PC-3 (cell line): ENCODE measurements at regions of chr15 and their contacts with region 1.

Region 1: GRCh38 chr15:36591536-36592411 is 12.3 kb downstream of the CDIN1 start:
- DNase-seq: peak; percentile 88
- ATAC-seq: peak; percentile 37
- H3K4me3 ChIP-seq: peak overlapping the region; percentile 17; the same call in 1 of the 2 replicates
- H3K27ac ChIP-seq: peak overlapping the region; percentile 95
- H3K4me1 ChIP-seq: peaks cover 69% of the 10 kb centered on the region
- H3K27me3 ChIP-seq: no peaks in the 10 kb centered on the region
- CTCF ChIP-seq: peak; percentile 33; the same call in 1 of the 2 replicates

Region 2: DNA sequence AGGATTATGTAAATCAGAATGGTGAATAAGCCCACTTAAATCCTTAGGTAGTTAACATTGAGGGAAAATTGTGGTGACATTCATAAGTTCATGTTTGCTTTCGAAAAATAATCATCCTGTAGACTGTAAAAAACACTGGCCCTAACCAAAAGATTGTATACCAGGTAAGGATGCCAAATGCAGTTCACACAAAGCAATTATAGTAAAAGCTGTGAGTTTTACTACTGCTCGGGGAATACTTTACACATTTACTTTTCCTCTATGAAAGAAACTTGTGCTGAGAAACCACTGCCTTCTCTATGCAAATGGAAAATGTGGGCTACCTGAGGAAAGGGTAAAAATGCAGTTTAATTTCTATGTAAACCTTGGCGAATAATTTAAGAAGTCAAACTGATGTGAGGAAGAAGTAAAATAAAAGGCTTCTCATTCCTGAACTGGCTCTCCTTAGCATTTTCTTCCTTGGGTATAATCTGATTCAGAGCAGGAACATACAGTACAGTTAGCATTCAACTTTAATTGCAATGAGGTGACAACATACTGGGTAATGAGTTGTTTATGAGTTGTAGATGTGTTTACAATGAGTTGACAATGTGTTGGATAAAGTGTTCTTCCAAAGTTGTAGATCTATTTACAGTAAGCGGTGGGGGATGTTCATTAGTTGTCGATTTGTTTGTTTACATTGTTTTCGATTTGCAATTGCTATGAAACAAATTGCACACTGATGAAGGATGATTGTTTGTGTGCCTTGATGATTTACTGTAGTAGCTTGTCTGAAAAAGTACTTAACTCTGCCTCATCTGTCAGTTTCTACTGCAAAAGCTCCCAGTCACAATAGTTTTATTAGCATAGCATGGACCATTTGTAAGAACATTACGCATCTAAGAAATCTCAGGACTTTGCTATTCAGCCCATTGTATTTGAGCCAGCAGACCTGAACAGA is 592.8 kb before region 1 on chr15:
- CTCF ChIA-PET with region 1: no interaction called
- POLR2A ChIA-PET with region 1: interaction called, 13 read pairs
- intact Hi-C with region 1: no loop called
- DNase-seq: no peak
- ATAC-seq: peak; percentile 42
- H3K4me3 ChIP-seq: no peak overlapping the region
- H3K27ac ChIP-seq: no peak overlapping the region
- H3K4me1 ChIP-seq: no peaks in the 10 kb centered on the region
- H3K27me3 ChIP-seq: no peaks in the 10 kb centered on the region
- CTCF ChIP-seq: no peak

Region 3: GRCh38 chr15:36612063-36612788 is 20.5 kb after region 1 on chr15:
- CTCF ChIA-PET with region 1: no interaction called
- POLR2A ChIA-PET with region 1: interaction called, 7 read pairs
- intact Hi-C with region 1: loop called (anchors 1 kb)
- DNase-seq: peak; percentile 96
- ATAC-seq: peak; percentile 96
- H3K4me3 ChIP-seq: peak overlapping the region; percentile 40
- H3K27ac ChIP-seq: peak overlapping the region; percentile 94
- H3K4me1 ChIP-seq: peaks cover 44% of the 10 kb centered on the region
- H3K27me3 ChIP-seq: no peaks in the 10 kb centered on the region
- CTCF ChIP-seq: no peak

Region 4: GRCh38 chr15:36798366-36798765 is 206.6 kb after region 1 on chr15:
- CTCF ChIA-PET with region 1: no interaction called
- POLR2A ChIA-PET with region 1: no interaction called
- intact Hi-C with region 1: loop called (anchors 5 kb)
- DNase-seq: peak; percentile 92
- ATAC-seq: peak; percentile 77
- H3K4me3 ChIP-seq: no peak overlapping the region
- H3K27ac ChIP-seq: peak overlapping the region; percentile 20
- H3K4me1 ChIP-seq: peaks cover 37% of the 10 kb centered on the region
- H3K27me3 ChIP-seq: no peaks in the 10 kb centered on the region
- CTCF ChIP-seq: no peak

Region 5: DNA sequence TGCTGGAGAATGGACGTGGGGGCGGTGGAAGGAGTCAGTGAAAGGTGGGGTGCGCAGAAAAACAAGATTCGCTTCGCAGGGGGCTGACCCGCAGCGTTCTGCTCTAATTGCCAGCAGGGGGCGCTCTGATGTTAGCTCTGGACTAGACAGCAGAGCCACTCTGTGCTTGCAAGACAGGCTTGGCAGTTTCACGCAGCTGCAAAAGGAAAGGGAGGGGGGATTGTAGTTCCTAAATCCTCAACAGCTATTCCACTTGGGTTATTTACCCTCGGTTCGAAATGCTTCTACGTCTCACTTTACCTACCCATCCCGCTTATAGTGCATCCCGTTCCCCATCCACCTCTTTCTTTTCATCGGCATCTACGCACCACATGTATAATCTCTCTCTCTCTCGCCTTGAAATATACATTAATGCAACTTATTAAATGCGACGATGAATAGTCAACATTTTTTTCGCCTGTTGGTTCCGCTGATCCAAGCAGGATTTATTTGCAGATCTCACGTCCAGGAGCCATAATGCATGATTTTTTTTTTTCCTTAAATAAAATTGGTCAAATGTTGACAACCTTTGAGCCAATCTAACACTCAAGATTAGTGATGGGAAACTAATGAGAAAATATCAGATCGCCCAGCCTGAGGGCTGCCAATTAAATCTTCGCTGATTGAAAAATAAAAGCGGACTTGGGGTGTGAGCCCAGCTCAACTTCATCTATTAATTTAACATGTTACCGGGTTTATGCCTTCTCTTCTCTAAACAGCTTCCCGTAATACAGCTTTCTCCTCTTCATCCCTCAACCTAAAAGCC is 292.1 kb after region 1 on chr15:
- CTCF ChIA-PET with region 1: no interaction called
- POLR2A ChIA-PET with region 1: no interaction called
- intact Hi-C with region 1: loop called (anchors 5 kb)
- DNase-seq: peak; percentile 88
- ATAC-seq: peak; percentile 92
- H3K4me3 ChIP-seq: peak overlapping the region; percentile 70
- H3K27ac ChIP-seq: no peak overlapping the region
- H3K4me1 ChIP-seq: peaks cover 12% of the 10 kb centered on the region
- H3K27me3 ChIP-seq: peaks cover 45% of the 10 kb centered on the region
- CTCF ChIP-seq: peak; percentile 89

Region 6: GRCh38 chr15:37100109-37100965 is 508.6 kb after region 1 on chr15 and contains the start of gene MEIS2:
- CTCF ChIA-PET with region 1: no interaction called
- POLR2A ChIA-PET with region 1: no interaction called
- intact Hi-C with region 1: loop called (anchors 2 kb)
- DNase-seq: peak; percentile 85
- ATAC-seq: peak; percentile 41
- H3K4me3 ChIP-seq: peak within 1 kb of the TSS; percentile 93
- H3K27ac ChIP-seq: peak within 1 kb of the TSS; percentile 87
- H3K4me1 ChIP-seq: peaks cover 24% of the 10 kb centered on the region; the same call in 1 of the 2 replicates
- H3K27me3 ChIP-seq: no peaks in the 10 kb centered on the region
- CTCF ChIP-seq: no peak
- total RNA-seq, gene MEIS2: 10.0 and 17.5 TPM in 2 replicates

Region 7: GRCh38 chr15:37891766-37892368 is 1300.1 kb after region 1 on chr15:
- CTCF ChIA-PET with region 1: no interaction called
- POLR2A ChIA-PET with region 1: no interaction called
- intact Hi-C with region 1: loop called (anchors 5 kb)
- DNase-seq: peak; percentile 72
- ATAC-seq: peak; percentile 94
- H3K4me3 ChIP-seq: no peak overlapping the region
- H3K27ac ChIP-seq: no peak overlapping the region
- H3K4me1 ChIP-seq: peaks cover 4% of the 10 kb centered on the region; the same call in 1 of the 2 replicates
- H3K27me3 ChIP-seq: peaks cover 23% of the 10 kb centered on the region
- CTCF ChIP-seq: peak; percentile 92